Activated CD4-positive, alpha-beta T cell treated with anti-CD3 and anti-CD28 coated beads for 36 hours (primary cell): ENCODE measurements at regions of chr22 and their contacts with region 1.

Region 1: GRCh38 chr22:29901354-29901753 is 18.4 kb downstream of the MTMR3 start:
- DNase-seq: no peak
- ATAC-seq: no peak
- H3K4me3 Mint-ChIP-seq: no peak overlapping the region
- H3K27ac Mint-ChIP-seq: no peak overlapping the region
- H3K4me1 Mint-ChIP-seq: peaks cover 32% of the 10 kb centered on the region
- H3K27me3 Mint-ChIP-seq: no peaks in the 10 kb centered on the region

Region 2: GRCh38 chr22:30010789-30011405 is 109.5 kb after region 1 on chr22:
- CTCF ChIA-PET with region 1: no interaction called
- POLR2A ChIA-PET with region 1: interaction called, 11 read pairs
- intact Hi-C with region 1: no loop called
- DNase-seq: no peak
- ATAC-seq: no peak
- H3K4me3 Mint-ChIP-seq: no peak overlapping the region
- H3K27ac Mint-ChIP-seq: no peak overlapping the region
- H3K4me1 Mint-ChIP-seq: no peaks in the 10 kb centered on the region
- H3K27me3 Mint-ChIP-seq: no peaks in the 10 kb centered on the region